GM12878 (cell line): ENCODE measurements at regions of chr6 and their contacts with region 1.

Region 1: GRCh38 chr6:32868257-32868788 is 14.3 kb downstream of the PSMB9 start:
- DNase-seq: no peak
- ATAC-seq: peak; percentile 88
- H3K4me3 ChIP-seq: no peak overlapping the region
- H3K27ac ChIP-seq: no peak overlapping the region
- H3K4me1 ChIP-seq: peaks cover 23% of the 10 kb centered on the region
- H3K27me3 ChIP-seq: no peaks in the 10 kb centered on the region
- CTCF ChIP-seq: peak; percentile 67 to 85 (median 85)
- EP300 ChIP-seq: no peak
- POLR2A ChIP-seq: no peak
- RAD21 ChIP-seq: peak; percentile 84

Region 2: DNA sequence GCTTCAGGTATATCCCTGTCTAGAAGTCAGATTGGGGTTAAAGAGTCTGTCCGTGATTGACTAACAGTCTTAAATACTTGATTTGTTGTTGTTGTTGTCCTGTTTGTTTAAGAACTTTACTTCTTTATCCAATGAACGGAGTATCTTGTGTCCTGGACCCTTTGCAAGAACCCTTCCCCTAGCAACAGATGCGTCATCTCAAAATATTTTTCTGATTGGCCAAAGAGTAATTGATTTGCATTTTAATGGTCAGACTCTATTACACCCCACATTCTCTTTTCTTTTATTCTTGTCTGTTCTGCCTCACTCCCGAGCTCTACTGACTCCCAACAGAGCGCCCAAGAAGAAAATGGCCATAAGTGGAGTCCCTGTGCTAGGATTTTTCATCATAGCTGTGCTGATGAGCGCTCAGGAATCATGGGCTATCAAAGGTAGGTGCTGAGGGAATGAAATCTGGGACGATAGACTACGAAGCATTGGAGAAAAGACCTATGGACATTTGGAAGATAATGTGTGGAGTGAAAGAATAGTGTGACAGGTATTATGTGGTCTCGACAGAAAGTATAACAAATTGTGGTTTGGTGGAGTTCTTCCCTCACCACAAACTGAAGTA is 428.6 kb before region 1 on chr6 and contains the start of gene HLA-DRA:
- CTCF ChIA-PET with region 1: interaction called, 8 read pairs
- POLR2A ChIA-PET with region 1: interaction called, 5 read pairs
- RAD21 ChIA-PET with region 1: interaction called, 4 read pairs
- SMC1A ChIA-PET with region 1: interaction called, 4 read pairs
- in situ Hi-C with region 1: no loop called
- intact Hi-C with region 1: loop called (anchors 5 kb)
- DNase-seq: peak; percentile 99
- ATAC-seq: peak; percentile 71
- H3K4me3 ChIP-seq: peak within 1 kb of the TSS; percentile 99
- H3K27ac ChIP-seq: peak within 1 kb of the TSS; percentile 100
- H3K4me1 ChIP-seq: peaks cover 29% of the 10 kb centered on the region
- H3K27me3 ChIP-seq: no peaks in the 10 kb centered on the region
- CTCF ChIP-seq: no peak
- EP300 ChIP-seq: peak; percentile 66 to 68; a peak in 3 of 4 replicates
- POLR2A ChIP-seq: peak; percentile 95
- RAD21 ChIP-seq: no peak
- polyA plus RNA-seq, gene HLA-DRA: 4,131 to 6,024 TPM

Region 3: DNA sequence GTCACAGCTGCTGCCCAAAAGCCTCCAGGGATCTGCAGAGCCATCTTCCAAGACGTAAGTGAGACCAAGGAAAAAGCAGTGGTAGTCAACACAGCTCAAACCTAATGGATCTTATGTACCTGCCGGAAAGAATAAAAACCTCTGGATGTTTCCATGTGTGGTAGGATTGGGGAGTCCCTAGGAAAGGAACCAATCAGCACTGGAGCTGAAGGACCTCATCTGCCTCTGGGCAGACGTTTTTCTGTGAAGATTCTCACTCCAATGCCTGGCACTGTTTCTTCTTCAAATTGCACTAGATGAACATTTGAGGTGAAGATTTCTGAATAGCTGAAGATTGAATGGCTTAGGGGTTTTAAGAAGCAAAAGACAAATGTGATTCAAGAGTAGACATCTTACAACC is 104.9 kb before region 1 on chr6 and contains the start of gene HLA-DQB2:
- CTCF ChIA-PET with region 1: no interaction called
- POLR2A ChIA-PET with region 1: no interaction called
- RAD21 ChIA-PET with region 1: no interaction called
- SMC1A ChIA-PET with region 1: no interaction called
- in situ Hi-C with region 1: no loop called
- intact Hi-C with region 1: no loop called
- DNase-seq: no peak
- ATAC-seq: no peak
- H3K4me3 ChIP-seq: no peak within 1 kb of the TSS
- H3K27ac ChIP-seq: no peak within 1 kb of the TSS
- H3K4me1 ChIP-seq: no peaks in the 10 kb centered on the region
- H3K27me3 ChIP-seq: peaks cover 3% of the 10 kb centered on the region in 2 experiments; a peak in 3 of 4 replicates
- CTCF ChIP-seq: no peak
- EP300 ChIP-seq: no peak
- POLR2A ChIP-seq: no peak
- RAD21 ChIP-seq: no peak
- polyA plus RNA-seq, gene HLA-DQB2: 6.6 to 9.5 TPM

Region 4: GRCh38 chr6:32796848-32797776 is 71.2 kb before region 1 on chr6:
- CTCF ChIA-PET with region 1: interaction called, 26 read pairs
- POLR2A ChIA-PET with region 1: no interaction called
- RAD21 ChIA-PET with region 1: interaction called, 26 read pairs
- SMC1A ChIA-PET with region 1: interaction called, 53 read pairs
- in situ Hi-C with region 1: no loop called
- intact Hi-C with region 1: loop called (anchors 1 kb)
- DNase-seq: no peak
- ATAC-seq: peak; percentile 89
- H3K4me3 ChIP-seq: peak overlapping the region; percentile 29; the same call in 1 of the 2 replicates
- H3K27ac ChIP-seq: peak overlapping the region; percentile 32
- H3K4me1 ChIP-seq: peaks cover 19% of the 10 kb centered on the region
- H3K27me3 ChIP-seq: peaks cover 0 to 5% of the 10 kb centered on the region in 2 experiments; a peak in 2 of 4 replicates
- CTCF ChIP-seq: peak; percentile 69 to 89 (median 86)
- EP300 ChIP-seq: no peak
- POLR2A ChIP-seq: no peak
- RAD21 ChIP-seq: peak; percentile 74

Region 5: GRCh38 chr6:32825966-32826365 is 42.4 kb before region 1 on chr6:
- CTCF ChIA-PET with region 1: interaction called, 66 read pairs
- POLR2A ChIA-PET with region 1: interaction called, 8 read pairs
- RAD21 ChIA-PET with region 1: interaction called, 15 read pairs
- SMC1A ChIA-PET with region 1: interaction called, 51 read pairs
- in situ Hi-C with region 1: no loop called
- intact Hi-C with region 1: loop called (anchors 5 kb)
- DNase-seq: no peak
- ATAC-seq: peak; percentile 36; the same call in 1 of the 3 replicates
- H3K4me3 ChIP-seq: no peak overlapping the region
- H3K27ac ChIP-seq: no peak overlapping the region
- H3K4me1 ChIP-seq: no peaks in the 10 kb centered on the region
- H3K27me3 ChIP-seq: no peaks in the 10 kb centered on the region
- CTCF ChIP-seq: peak; percentile 30 to 55 (median 36); a peak in 4 of 6 replicates
- EP300 ChIP-seq: no peak
- POLR2A ChIP-seq: no peak
- RAD21 ChIP-seq: peak; percentile 39

Region 6: DNA sequence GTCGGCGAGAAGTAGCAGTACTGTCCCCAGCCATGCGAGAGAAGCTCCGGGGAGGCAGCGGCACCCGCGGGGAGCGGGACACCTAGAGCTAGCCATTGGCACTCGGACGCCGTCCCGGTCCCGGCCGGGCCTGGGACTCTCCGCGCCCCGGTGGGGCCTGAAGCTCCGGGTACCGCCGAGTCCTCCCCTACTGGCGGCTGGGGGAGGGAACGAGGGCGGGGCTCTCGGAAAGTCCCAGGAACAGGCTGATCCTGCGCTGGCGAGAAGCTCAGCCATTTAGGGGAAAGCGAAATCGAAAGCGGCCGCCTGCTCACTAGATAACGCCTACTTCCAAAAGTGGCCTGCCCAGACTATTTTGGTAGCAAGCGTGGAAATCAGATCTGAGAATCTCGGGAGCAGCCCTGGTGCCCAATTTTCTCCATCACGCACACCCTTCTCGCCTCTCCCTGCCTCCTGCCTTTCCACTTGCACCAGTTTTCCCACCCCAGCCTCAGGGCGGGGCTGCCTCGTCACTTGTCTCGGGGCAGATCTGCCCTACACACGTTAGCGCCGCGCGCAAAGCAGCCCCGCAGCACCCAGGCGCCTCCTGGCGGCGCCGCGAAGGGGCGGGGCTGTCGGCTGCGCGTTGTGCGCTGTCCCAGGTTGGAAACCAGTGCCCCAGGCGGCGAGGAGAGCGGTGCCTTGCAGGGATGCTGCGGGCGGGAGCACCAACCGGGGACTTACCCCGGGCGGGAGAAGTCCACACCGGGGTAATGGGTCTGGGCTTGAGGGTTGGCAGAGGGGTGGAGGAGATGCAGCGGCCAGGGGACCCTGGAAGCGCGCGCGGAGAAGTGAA is 14.6 kb before region 1 on chr6 and contains the starts of genes PSMB9 and TAP1:
- CTCF ChIA-PET with region 1: interaction called, 73 read pairs
- POLR2A ChIA-PET with region 1: interaction called, 35 read pairs
- RAD21 ChIA-PET with region 1: interaction called, 95 read pairs
- SMC1A ChIA-PET with region 1: interaction called, 130 read pairs
- in situ Hi-C with region 1: no loop called
- intact Hi-C with region 1: no loop called
- DNase-seq: peak; percentile 89
- ATAC-seq: peak; percentile 88
- H3K4me3 ChIP-seq: peak within 1 kb of the TSS; percentile 88
- H3K27ac ChIP-seq: peak within 1 kb of the TSS; percentile 100
- H3K4me1 ChIP-seq: peaks cover 32% of the 10 kb centered on the region
- H3K27me3 ChIP-seq: no peaks in the 10 kb centered on the region
- CTCF ChIP-seq: peak; percentile 79 to 84 (median 83)
- EP300 ChIP-seq: no peak
- POLR2A ChIP-seq: peak; percentile 83
- RAD21 ChIP-seq: peak; percentile 78
- polyA plus RNA-seq, gene PSMB9: 202 to 299 TPM
- polyA plus RNA-seq, gene TAP1: 33.4 to 60.0 TPM

Region 7: GRCh38 chr6:32940656-32941213 is 72.4 kb after region 1 on chr6 and contains the start of gene HLA-DMB:
- CTCF ChIA-PET with region 1: interaction called, 10 read pairs
- POLR2A ChIA-PET with region 1: interaction called, 3 read pairs
- RAD21 ChIA-PET with region 1: interaction called, 7 read pairs
- SMC1A ChIA-PET with region 1: interaction called, 4 read pairs
- in situ Hi-C with region 1: no loop called
- intact Hi-C with region 1: no loop called
- DNase-seq: peak; percentile 97
- ATAC-seq: peak; percentile 74
- H3K4me3 ChIP-seq: peak within 1 kb of the TSS; percentile 79
- H3K27ac ChIP-seq: peak within 1 kb of the TSS; percentile 96
- H3K4me1 ChIP-seq: peaks cover 41% of the 10 kb centered on the region
- H3K27me3 ChIP-seq: no peaks in the 10 kb centered on the region
- CTCF ChIP-seq: no peak
- EP300 ChIP-seq: no peak
- POLR2A ChIP-seq: peak; percentile 71
- RAD21 ChIP-seq: no peak
- polyA plus RNA-seq, gene HLA-DMB: 117 to 170 TPM

Region 8: GRCh38 chr6:33508935-33509926 is 640.9 kb after region 1 on chr6:
- CTCF ChIA-PET with region 1: no interaction called
- POLR2A ChIA-PET with region 1: no interaction called
- RAD21 ChIA-PET with region 1: no interaction called
- SMC1A ChIA-PET with region 1: no interaction called
- in situ Hi-C with region 1: no loop called
- intact Hi-C with region 1: no loop called
- DNase-seq: no peak
- ATAC-seq: peak; percentile 47
- H3K4me3 ChIP-seq: 0 out of 2 replicates have a peak overlapping the region, but pooled peaks have one; percentile 12
- H3K27ac ChIP-seq: peak overlapping the region; percentile 38
- H3K4me1 ChIP-seq: peaks cover 16% of the 10 kb centered on the region
- H3K27me3 ChIP-seq: no peaks in the 10 kb centered on the region
- CTCF ChIP-seq: no peak
- EP300 ChIP-seq: no peak
- POLR2A ChIP-seq: no peak
- RAD21 ChIP-seq: no peak